Naive thymus-derived CD4-positive, alpha-beta T cell (primary cell): ENCODE measurements at regions of chr7 and their contacts with region 1.

Region 1: DNA sequence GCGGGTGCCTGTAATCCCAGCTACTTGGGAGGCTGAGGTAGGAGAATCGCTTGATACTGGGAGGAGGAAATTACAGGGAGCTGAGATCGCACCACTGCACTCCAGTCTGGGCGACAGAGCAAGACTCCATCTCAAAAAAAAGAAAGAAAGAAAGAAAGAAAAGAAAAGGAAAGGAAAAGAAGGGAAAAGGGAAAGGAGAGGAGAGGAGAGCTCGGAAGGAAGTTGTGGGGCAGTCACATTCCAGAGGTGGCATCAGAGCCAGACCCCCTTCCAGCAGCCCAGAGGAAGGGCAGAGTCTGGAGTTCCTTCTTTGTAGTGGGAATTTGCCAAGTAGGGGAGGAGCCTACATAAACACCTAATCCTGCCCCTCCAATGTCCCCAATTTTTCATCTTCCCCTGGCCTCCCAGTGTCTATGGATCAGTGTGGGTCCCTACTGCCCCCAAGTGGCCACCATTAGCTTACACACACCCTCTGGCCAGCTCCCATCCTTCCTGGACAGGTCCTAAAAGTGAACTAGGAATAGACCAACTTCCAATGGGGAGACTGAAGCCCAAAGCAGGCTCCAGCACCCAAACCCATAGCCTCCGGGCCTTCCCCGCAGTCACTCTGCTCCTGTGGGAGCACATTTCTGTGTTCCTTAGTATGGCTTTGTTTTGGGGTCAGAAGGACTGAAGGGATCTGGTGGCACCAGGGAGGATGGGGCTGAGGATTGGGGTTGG is 39.6 kb upstream of the HSPB1 start:
- DNase-seq: peak in 1 of 9 donors; percentile 18
- ATAC-seq: peak; percentile 60
- H3K4me3 ChIP-seq: no peak overlapping the region
- H3K4me3 Mint-ChIP-seq: no peak overlapping the region
- H3K27ac ChIP-seq: no peak overlapping the region
- H3K27ac Mint-ChIP-seq: peak overlapping the region in 1 of 9 donors; percentile 54
- H3K4me1 ChIP-seq: no peaks in the 10 kb centered on the region
- H3K4me1 Mint-ChIP-seq: peaks cover 0 to 18% (median 0%) of the 10 kb centered on the region in 7 donors
- H3K27me3 ChIP-seq: peaks cover 0 to 3% of the 10 kb centered on the region in 2 donors
- H3K27me3 Mint-ChIP-seq: peaks cover 20 to 46% (median 32%) of the 10 kb centered on the region in 5 donors

Region 2: GRCh38 chr7:76179686-76180085 is 83.2 kb before region 1 on chr7:
- CTCF ChIA-PET with region 1: interaction called, 3 read pairs
- POLR2A ChIA-PET with region 1: no interaction called
- intact Hi-C with region 1: loop called (anchors 1 kb)
- DNase-seq: no peak
- ATAC-seq: no peak
- H3K4me3 ChIP-seq: no peak overlapping the region
- H3K4me3 Mint-ChIP-seq: no peak overlapping the region
- H3K27ac ChIP-seq: no peak overlapping the region
- H3K27ac Mint-ChIP-seq: no peak overlapping the region
- H3K4me1 ChIP-seq: no peaks in the 10 kb centered on the region
- H3K4me1 Mint-ChIP-seq: peaks cover 2 to 7% (median 4%) of the 10 kb centered on the region in 7 donors
- H3K27me3 ChIP-seq: no peaks in the 10 kb centered on the region
- H3K27me3 Mint-ChIP-seq: peaks cover 0 to 2% (median 0%) of the 10 kb centered on the region in 5 donors

Region 3: GRCh38 chr7:76234931-76235441 is 27.9 kb before region 1 on chr7:
- CTCF ChIA-PET with region 1: no interaction called
- POLR2A ChIA-PET with region 1: no interaction called
- intact Hi-C with region 1: loop called in 1 of 2 experiments (anchors 1 kb)
- DNase-seq: peak; percentile 22 to 84 (median 52)
- ATAC-seq: peak; percentile 94
- H3K4me3 ChIP-seq: peak overlapping the region; percentile 27
- H3K4me3 Mint-ChIP-seq: peak overlapping the region; percentile 60 to 83 (median 68)
- H3K27ac ChIP-seq: no peak overlapping the region
- H3K27ac Mint-ChIP-seq: no peak overlapping the region
- H3K4me1 ChIP-seq: no peaks in the 10 kb centered on the region
- H3K4me1 Mint-ChIP-seq: peaks cover 0 to 16% (median 7%) of the 10 kb centered on the region in 7 donors
- H3K27me3 ChIP-seq: no peaks in the 10 kb centered on the region
- H3K27me3 Mint-ChIP-seq: peaks cover 43 to 71% (median 48%) of the 10 kb centered on the region in 5 donors